ENCODE measurements at regions of chr16 and their contacts with region 1.

Region 1: GRCh38 chr16:85869785-85870558 is 29.0 kb upstream of the IRF8 start:
- DNase-seq: peak; percentile 50 to 72 (median 68)
- H3K4me3 ChIP-seq: peak overlapping the region; percentile 5 to 71 (median 14)
- H3K4me3 Mint-ChIP-seq: peak overlapping the region; percentile 70 to 89
- H3K27ac ChIP-seq: peak overlapping the region; percentile 92 to 98
- H3K27ac Mint-ChIP-seq: peak overlapping the region; percentile 98 to 100 (median 99)
- H3K4me1 ChIP-seq: peaks cover 71 to 79% of the 10 kb centered on the region in 2 donors
- H3K4me1 Mint-ChIP-seq: peaks cover 82% of the 10 kb centered on the region
- H3K27me3 ChIP-seq: no peaks in the 10 kb centered on the region
- H3K27me3 Mint-ChIP-seq: peaks cover 0 to 2% (median 0%) of the 10 kb centered on the region in 3 donors
- CTCF ChIP-seq: no peak

Region 2: DNA sequence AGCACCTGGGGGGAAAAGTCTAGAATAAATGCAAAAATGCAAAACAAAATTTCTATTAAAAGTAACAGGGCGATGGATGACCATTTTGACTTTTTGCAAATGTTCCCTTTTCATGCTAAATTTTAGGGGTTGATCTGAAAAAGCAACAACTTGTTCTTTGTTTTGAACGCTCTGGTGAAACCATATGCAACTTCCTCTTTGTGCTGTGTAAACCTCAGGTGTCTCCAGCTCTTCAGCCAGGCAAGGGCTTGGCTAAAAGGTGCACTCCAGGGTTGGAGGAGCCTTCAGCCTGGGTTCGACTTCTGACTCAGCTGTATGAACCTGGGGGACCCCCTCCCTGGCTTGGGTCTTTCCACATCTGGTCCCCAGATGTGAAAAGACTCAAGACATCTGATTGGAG is 38.5 kb after region 1 on chr16:
- intact Hi-C with region 1: loop called in 1 of 2 experiments (anchors 5 kb)
- DNase-seq: peak in 2 of 3 donors; percentile 70 to 71
- H3K4me3 ChIP-seq: peak overlapping the region in 2 of 3 experiments; percentile 3 to 57
- H3K4me3 Mint-ChIP-seq: peak overlapping the region; percentile 49 to 84
- H3K27ac ChIP-seq: peak overlapping the region; percentile 87 to 91
- H3K27ac Mint-ChIP-seq: peak overlapping the region; percentile 97 to 99 (median 99)
- H3K4me1 ChIP-seq: peaks cover 100% of the 10 kb centered on the region in 2 donors
- H3K4me1 Mint-ChIP-seq: peaks cover 98% of the 10 kb centered on the region
- H3K27me3 ChIP-seq: no peaks in the 10 kb centered on the region
- H3K27me3 Mint-ChIP-seq: peaks cover 0 to 4% (median 2%) of the 10 kb centered on the region in 3 donors
- CTCF ChIP-seq: no peak